ENCODE measurements at regions of chr16 and their contacts with region 1.

Region 1: DNA sequence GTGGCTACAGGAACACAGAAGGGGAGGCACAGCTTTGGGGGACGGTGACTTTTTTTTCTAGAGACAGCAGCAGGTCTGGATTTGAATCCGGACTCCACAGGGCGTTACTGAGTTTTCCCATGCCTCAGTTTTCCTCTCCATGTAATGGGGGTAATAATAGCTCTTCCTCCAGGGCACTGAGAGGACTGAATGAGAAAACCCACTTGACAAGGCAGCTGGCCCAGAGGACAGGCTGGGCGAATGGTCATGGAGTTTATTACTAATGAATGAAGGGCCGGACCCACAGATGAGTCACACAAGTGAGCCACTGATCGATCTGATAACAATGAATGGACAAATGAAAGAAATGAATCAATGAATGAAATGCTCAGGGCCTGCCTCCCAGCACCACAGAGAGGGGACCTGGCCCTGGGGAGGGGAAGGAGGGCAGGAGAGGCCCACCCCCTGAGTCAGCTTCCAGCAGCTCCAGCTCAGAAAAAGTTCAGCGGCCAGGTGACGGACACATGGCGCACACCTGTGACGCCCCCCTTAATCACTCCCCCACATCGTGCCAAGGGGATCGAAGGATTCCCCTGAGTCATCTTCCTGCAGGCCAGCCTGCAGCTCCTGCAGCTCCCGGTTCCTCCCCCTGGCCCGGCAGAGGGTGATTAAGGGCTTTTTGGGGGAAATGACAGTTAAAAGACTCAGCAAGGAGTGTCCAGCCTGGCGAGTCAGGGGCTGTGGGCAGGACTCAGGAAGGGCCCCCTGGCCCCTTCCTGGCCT is 54.3 kb downstream of the SOCS1 start:
- DNase-seq: no peak
- H3K4me3 ChIP-seq: peak overlapping the region; percentile 6
- CTCF ChIP-seq: no peak

Region 2: DNA sequence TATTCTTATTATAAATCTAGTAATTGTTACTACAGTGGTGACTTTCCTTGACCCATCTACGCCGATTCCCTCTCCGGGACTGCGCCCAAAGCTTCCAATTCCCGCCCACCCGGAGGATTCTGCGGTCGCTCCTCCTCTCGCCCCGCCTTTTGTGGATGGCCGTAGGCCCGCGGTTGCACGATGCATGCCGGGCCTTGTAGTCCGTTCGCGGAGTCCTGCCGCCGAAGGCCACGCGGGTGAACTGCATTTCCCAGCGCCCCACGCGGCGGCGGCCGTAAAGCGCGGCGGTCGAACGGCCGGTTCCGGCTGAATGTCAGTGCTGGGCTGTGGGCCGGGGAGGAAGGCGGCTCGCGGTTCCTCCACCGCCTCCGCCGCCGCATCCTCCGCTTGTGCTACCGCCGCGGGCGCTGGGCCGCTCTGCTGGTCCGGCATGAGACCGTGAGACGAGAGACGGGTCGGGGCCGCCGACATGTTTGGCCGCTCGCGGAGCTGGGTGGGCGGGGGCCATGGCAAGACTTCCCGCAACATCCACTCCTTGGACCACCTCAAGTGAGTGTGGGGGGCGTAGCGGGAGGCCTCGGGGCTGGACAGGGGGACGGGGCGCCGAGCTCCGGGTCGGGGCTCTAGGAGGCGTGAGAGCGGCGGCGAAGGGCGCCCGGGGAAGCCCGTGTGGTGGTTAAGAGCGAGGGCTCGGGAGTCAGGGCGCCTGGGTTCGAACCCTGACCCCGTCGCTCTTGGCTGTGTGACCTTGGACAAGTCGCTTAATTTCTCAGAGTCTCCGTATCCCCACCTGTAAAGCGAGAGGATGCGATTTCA is 257.2 kb before region 1 on chr16 and contains the start of gene CLEC16A:
- CTCF ChIA-PET with region 1: no interaction called
- POLR2A ChIA-PET with region 1: no interaction called
- DNase-seq: peak; percentile 70
- H3K4me3 ChIP-seq: peak within 1 kb of the TSS; percentile 86
- CTCF ChIP-seq: no peak

Region 3: GRCh38 chr16:11218604-11218962 is 16.9 kb after region 1 on chr16:
- CTCF ChIA-PET with region 1: interaction called, 21 read pairs
- POLR2A ChIA-PET with region 1: no interaction called
- DNase-seq: no peak
- H3K4me3 ChIP-seq: no peak overlapping the region
- CTCF ChIP-seq: no peak

Region 4: GRCh38 chr16:11240636-11241473 is 39.2 kb after region 1 on chr16:
- CTCF ChIA-PET with region 1: no interaction called
- POLR2A ChIA-PET with region 1: no interaction called
- DNase-seq: no peak
- H3K4me3 ChIP-seq: no peak overlapping the region
- CTCF ChIP-seq: no peak